ENCODE measurements at regions of chr13 and their contacts with region 1.

Region 1: DNA sequence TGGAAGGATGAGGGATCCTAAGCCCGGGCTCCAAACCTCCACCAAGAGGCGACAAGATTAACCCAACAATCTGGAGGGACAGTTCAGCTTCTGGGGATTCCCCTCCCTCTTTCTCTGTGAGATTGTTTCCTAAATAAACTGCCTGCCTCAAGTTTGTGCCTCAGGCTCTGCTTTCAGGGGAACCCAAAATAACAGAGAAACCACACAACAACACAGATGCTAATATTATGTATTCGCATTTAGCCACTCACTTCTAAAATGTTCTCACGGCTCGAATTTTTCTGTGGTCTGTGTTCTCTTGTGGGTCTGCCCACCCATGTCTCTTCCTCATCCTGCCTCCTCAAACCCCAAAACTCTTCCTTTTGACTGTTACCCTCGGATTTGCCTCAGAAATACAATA is 1381.1 kb upstream of the SLC10A2 start:
- DNase-seq: no peak
- H3K4me3 ChIP-seq: no peak overlapping the region
- H3K27ac ChIP-seq: no peak overlapping the region
- H3K4me1 ChIP-seq: no peaks in the 10 kb centered on the region
- H3K27me3 ChIP-seq: no peaks in the 10 kb centered on the region
- CTCF ChIP-seq: no peak

Region 2: GRCh38 chr13:102707465-102707864 is 1739.9 kb before region 1 on chr13:
- CTCF ChIA-PET with region 1: no interaction called
- POLR2A ChIA-PET with region 1: no interaction called
- intact Hi-C with region 1: no loop called
- DNase-seq: peak in 1 of 2 experiments; percentile 70
- H3K4me3 ChIP-seq: no peak overlapping the region
- H3K27ac ChIP-seq: peak overlapping the region; percentile 41; the same call in 1 of the 2 replicates
- H3K4me1 ChIP-seq: peaks cover 58% of the 10 kb centered on the region
- H3K27me3 ChIP-seq: no peaks in the 10 kb centered on the region
- CTCF ChIP-seq: no peak

Region 3: GRCh38 chr13:104414771-104415170 is 32.6 kb before region 1 on chr13:
- CTCF ChIA-PET with region 1: no interaction called
- POLR2A ChIA-PET with region 1: interaction called, 11 read pairs
- intact Hi-C with region 1: no loop called
- DNase-seq: no peak
- H3K4me3 ChIP-seq: no peak overlapping the region
- H3K27ac ChIP-seq: no peak overlapping the region
- H3K4me1 ChIP-seq: peaks cover 2% of the 10 kb centered on the region; the same call in 1 of the 2 replicates
- H3K27me3 ChIP-seq: no peaks in the 10 kb centered on the region
- CTCF ChIP-seq: no peak

Region 4: DNA sequence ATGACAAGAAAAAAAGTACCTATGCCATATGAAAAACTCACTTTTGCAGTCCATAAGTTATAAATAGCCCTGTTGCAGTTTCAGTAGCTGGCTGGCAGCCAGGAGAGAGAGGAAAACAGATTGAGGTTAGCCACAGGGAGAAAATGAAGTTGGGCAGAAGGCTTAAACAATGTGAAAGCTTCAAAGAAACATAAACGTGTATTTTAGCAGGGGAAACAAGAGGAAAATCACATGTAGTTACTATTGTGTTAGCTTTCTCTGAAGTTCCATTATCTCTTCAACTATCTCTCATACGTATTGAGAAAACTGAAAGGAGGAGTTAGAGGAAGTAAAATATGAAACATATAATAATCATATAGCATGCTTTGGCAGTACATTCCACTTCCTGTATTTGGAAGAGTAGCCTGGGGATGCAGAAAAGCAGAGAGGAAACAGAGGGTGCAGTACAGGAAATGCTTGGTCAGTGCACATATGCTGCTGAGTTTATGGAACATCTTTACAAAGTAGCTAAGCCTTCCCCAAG is 537.0 kb after region 1 on chr13:
- CTCF ChIA-PET with region 1: no interaction called
- POLR2A ChIA-PET with region 1: no interaction called
- intact Hi-C with region 1: no loop called
- DNase-seq: peak in 1 of 2 experiments; percentile 9
- H3K4me3 ChIP-seq: no peak overlapping the region
- H3K27ac ChIP-seq: no peak overlapping the region
- H3K4me1 ChIP-seq: no peaks in the 10 kb centered on the region
- H3K27me3 ChIP-seq: no peaks in the 10 kb centered on the region
- CTCF ChIP-seq: no peak

Measured in PC-9 (cell line).